MCF 10A (cell line): ENCODE measurements at regions of chr12 and their contacts with region 1.

Region 1: DNA sequence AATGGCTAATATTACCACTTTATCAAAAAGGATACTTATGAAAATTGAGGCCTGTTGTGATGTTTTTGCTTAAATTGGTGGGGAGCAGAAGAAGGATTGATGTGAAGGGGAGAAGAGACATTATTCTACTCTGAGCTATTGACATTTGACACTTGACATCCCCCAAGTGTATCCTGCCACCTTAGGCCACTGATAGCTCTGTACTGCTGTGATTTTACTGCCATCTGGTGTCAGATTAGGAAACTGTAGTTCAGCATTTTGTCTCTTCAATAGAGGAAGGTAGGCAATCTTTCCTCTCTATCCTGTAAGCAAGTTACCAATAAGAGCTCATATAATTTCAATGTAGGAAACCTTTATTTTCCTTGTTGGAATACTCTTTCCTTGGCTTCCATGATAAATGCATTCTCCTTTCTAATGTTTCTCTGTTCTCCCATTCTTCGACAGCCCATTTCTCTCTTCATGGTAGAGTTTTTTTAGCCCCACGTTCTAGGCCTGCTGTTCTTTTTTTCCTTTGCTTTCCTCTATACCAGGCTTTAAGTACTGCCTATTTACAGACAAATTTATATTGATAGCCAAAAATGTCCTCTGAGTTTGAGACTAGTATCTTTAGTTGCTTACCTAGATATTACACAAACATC is 46.3 kb downstream of the PPHLN1 start:
- DNase-seq: peak; percentile 65
- H3K4me3 Mint-ChIP-seq: no peak overlapping the region
- H3K27ac Mint-ChIP-seq: no peak overlapping the region
- H3K4me1 Mint-ChIP-seq: peaks cover 7% of the 10 kb centered on the region
- H3K27me3 Mint-ChIP-seq: no peaks in the 10 kb centered on the region
- CTCF ChIP-seq: peak; percentile 75

Region 2: DNA sequence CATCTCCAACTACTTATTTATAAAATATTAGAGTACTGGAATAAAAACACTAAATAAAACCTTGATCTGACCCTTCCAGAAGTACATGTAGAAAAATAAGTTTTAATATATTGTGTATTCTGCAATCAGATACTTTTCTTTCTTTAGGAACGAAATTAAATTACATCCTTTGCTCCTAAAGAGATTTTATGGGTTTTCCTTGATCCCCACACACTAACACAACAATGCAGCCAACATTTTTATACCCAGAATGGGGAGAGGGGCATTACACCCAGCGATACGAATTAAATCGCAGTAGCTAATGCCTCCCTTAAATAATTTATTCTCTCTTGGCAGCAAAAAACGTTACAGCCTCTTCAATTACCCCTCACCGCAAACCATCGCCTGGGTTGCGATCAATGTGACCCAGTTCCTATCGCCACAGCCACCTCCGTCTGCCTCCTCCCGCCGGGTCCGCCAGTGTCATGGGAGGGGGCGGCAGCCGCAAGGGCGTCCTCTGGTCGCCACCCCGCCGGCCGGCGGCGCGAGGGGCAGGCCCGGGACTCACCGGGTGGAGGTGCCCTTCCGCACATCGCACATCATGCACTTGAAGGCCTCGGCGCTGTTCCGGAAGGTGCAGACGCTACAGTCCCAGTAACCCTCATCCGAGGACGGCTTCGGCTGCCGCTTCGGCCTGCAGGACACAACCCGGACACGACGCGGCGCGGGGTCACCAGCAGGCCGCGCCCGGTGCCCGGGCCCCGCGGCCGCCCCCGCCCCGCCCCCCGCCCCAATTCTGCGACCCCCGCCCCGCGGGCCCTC is 135.0 kb before region 1 on chr12:
- CTCF ChIA-PET with region 1: interaction called, 3 read pairs
- POLR2A ChIA-PET with region 1: no interaction called
- intact Hi-C with region 1: loop called (anchors 2 kb)
- DNase-seq: peak; percentile 72
- H3K4me3 Mint-ChIP-seq: peak overlapping the region; percentile 95
- H3K27ac Mint-ChIP-seq: peak overlapping the region; percentile 97
- H3K4me1 Mint-ChIP-seq: peaks cover 19% of the 10 kb centered on the region
- H3K27me3 Mint-ChIP-seq: no peaks in the 10 kb centered on the region
- CTCF ChIP-seq: peak; percentile 26

Region 3: GRCh38 chr12:42338280-42338679 is 34.0 kb before region 1 on chr12:
- CTCF ChIA-PET with region 1: interaction called, 26 read pairs
- POLR2A ChIA-PET with region 1: no interaction called
- intact Hi-C with region 1: no loop called
- DNase-seq: no peak
- H3K4me3 Mint-ChIP-seq: no peak overlapping the region
- H3K27ac Mint-ChIP-seq: no peak overlapping the region
- H3K4me1 Mint-ChIP-seq: peaks cover 24% of the 10 kb centered on the region
- H3K27me3 Mint-ChIP-seq: no peaks in the 10 kb centered on the region
- CTCF ChIP-seq: no peak

Region 4: GRCh38 chr12:42360747-42361403 is 11.4 kb before region 1 on chr12:
- CTCF ChIA-PET with region 1: interaction called, 19 read pairs
- POLR2A ChIA-PET with region 1: interaction called, 4 read pairs
- intact Hi-C with region 1: no loop called
- DNase-seq: no peak
- H3K4me3 Mint-ChIP-seq: no peak overlapping the region
- H3K27ac Mint-ChIP-seq: no peak overlapping the region
- H3K4me1 Mint-ChIP-seq: peaks cover 4% of the 10 kb centered on the region
- H3K27me3 Mint-ChIP-seq: no peaks in the 10 kb centered on the region
- CTCF ChIP-seq: no peak

Region 5: DNA sequence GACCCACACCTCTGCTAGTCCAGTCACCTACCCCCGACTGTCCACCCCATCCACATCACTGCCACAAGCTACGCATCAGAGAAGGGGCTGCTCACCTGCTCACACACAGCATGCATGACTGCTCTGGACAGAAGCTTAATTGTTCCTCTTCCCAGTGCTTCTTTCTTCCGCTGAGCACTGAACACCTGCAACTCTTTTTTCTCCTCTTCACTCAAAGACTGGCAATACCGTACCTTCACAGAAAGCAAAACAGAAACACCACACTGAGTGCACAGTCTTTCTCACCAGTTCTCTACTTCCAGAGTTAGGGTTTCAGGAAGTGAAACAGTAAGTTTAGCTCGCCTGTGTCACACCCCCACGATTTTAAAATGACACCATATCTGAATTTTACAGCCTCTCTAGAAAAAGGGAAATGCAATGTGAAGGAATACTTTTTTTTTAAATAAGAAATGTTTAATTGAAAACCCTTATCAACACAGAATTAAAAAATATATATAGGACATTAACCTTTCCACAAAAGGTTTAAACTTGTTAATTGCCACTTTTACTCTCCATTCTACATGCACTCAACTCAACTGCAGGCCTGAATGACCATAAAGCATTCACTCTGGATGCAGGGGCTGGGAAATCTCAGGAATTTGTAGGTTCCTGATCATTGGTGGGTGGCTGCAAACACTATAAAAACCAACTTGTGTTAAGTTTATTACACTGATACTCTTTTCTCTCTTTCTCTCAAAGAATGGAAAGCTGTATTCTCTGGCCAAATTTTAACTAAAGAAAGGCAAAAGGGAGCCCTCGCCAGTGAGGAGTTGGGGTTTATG is 97.3 kb after region 1 on chr12:
- CTCF ChIA-PET with region 1: no interaction called
- POLR2A ChIA-PET with region 1: no interaction called
- intact Hi-C with region 1: no loop called
- DNase-seq: no peak
- H3K4me3 Mint-ChIP-seq: no peak overlapping the region
- H3K27ac Mint-ChIP-seq: no peak overlapping the region
- H3K4me1 Mint-ChIP-seq: peaks cover 4% of the 10 kb centered on the region
- H3K27me3 Mint-ChIP-seq: no peaks in the 10 kb centered on the region
- CTCF ChIP-seq: no peak

Region 6: GRCh38 chr12:42568952-42569915 is 197.0 kb after region 1 on chr12:
- CTCF ChIA-PET with region 1: interaction called, 9 read pairs
- POLR2A ChIA-PET with region 1: no interaction called
- intact Hi-C with region 1: loop called (anchors 2 kb)
- DNase-seq: peak; percentile 58
- H3K4me3 Mint-ChIP-seq: no peak overlapping the region
- H3K27ac Mint-ChIP-seq: no peak overlapping the region
- H3K4me1 Mint-ChIP-seq: peaks cover 6% of the 10 kb centered on the region
- H3K27me3 Mint-ChIP-seq: no peaks in the 10 kb centered on the region
- CTCF ChIP-seq: peak; percentile 57